Activated B cell treated with CpG ODN at 0.5 μM for 24 hours (primary cell): ENCODE measurements at regions of chr5 and their contacts with region 1.

Region 1: DNA sequence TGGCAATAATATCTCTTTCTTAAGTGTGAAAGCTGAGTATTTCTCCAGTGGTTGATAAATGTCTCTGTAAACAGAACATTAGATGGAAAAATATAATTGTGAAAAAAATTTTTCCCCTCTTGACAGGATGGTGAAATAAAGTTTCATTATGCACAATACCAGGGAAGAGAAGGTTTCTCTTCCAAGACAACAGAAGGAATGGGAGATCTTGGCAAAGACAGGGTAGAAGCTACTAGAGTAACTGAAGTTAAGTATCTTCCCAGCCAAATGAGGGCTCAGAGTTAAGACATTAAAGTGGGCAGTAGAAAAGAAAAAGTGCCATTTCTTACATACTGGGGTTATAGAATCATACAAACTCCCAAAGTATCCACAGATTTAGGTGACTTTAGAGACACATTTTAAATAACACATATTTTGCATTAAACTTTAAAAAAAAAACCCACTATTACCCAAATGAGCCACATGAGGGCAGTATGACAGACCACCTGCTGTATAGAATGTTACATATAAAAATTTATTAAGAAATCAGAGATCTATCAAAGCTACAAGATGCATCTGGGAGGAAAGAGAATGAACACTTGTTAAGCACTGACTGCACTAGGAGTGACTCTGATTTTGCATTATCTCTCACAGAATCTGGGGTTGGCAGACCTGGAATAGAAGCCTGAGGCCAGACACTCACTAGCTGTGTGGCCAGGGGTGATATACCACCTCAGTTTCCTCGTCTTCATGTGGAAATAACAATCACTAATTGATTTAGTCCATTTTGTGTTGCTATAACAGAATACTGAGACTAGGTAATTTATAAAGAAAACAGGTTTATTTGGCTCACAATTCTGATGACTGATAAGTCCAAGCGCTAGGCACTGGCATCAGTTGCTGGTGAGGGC is 98.5 kb downstream of the ARSB start:
- DNase-seq: no peak
- ATAC-seq: no peak
- H3K4me3 Mint-ChIP-seq: no peak overlapping the region
- H3K27ac Mint-ChIP-seq: peak overlapping the region; percentile 2
- H3K4me1 Mint-ChIP-seq: peaks cover 39% of the 10 kb centered on the region
- H3K27me3 Mint-ChIP-seq: no peaks in the 10 kb centered on the region
- CTCF ChIP-seq: peak; percentile 73

Region 2: DNA sequence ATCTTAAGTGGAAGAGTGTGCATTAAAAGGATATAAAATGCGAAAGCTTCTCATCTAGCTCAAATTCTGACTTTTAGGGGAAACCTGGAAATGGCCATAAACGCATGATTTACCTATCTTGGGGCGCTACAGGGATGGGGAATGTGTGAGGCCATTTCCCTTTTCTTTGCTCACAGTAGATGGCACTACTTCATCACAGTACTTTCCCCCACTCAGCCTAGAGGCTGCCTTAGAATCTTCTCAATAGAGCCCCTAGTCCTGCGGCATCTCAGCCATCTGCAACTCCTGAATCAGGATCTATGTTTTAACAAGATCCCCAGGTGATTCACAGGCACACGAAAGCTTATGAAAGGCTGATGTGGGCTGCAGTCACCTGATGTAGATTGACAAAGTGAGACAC is 348.8 kb before region 1 on chr5:
- CTCF ChIA-PET with region 1: interaction called, 3 read pairs
- POLR2A ChIA-PET with region 1: no interaction called
- intact Hi-C with region 1: loop called (anchors 1 kb)
- DNase-seq: no peak
- ATAC-seq: peak; percentile 80
- H3K4me3 Mint-ChIP-seq: no peak overlapping the region
- H3K27ac Mint-ChIP-seq: no peak overlapping the region
- H3K4me1 Mint-ChIP-seq: peaks cover 10% of the 10 kb centered on the region
- H3K27me3 Mint-ChIP-seq: no peaks in the 10 kb centered on the region
- CTCF ChIP-seq: no peak

Region 3: GRCh38 chr5:78648359-78649210 is 238.0 kb before region 1 on chr5 and contains the start of gene LHFPL2:
- CTCF ChIA-PET with region 1: interaction called, 5 read pairs
- POLR2A ChIA-PET with region 1: no interaction called
- intact Hi-C with region 1: loop called (anchors 2 kb)
- DNase-seq: peak; percentile 63
- ATAC-seq: peak; percentile 69
- H3K4me3 Mint-ChIP-seq: peak within 1 kb of the TSS; percentile 83
- H3K27ac Mint-ChIP-seq: peak within 1 kb of the TSS; percentile 73
- H3K4me1 Mint-ChIP-seq: peaks cover 25% of the 10 kb centered on the region
- H3K27me3 Mint-ChIP-seq: no peaks in the 10 kb centered on the region
- CTCF ChIP-seq: no peak
- total RNA-seq, gene LHFPL2: 11.0 and 12.0 TPM in 2 replicates

Region 4: GRCh38 chr5:78757269-78758053 is 129.1 kb before region 1 on chr5:
- CTCF ChIA-PET with region 1: interaction called, 3 read pairs
- POLR2A ChIA-PET with region 1: no interaction called
- intact Hi-C with region 1: loop called (anchors 2 kb)
- DNase-seq: no peak
- ATAC-seq: peak; percentile 38
- H3K4me3 Mint-ChIP-seq: peak overlapping the region; percentile 64
- H3K27ac Mint-ChIP-seq: peak overlapping the region; percentile 95
- H3K4me1 Mint-ChIP-seq: peaks cover 78% of the 10 kb centered on the region
- H3K27me3 Mint-ChIP-seq: no peaks in the 10 kb centered on the region
- CTCF ChIP-seq: no peak

Region 5: DNA sequence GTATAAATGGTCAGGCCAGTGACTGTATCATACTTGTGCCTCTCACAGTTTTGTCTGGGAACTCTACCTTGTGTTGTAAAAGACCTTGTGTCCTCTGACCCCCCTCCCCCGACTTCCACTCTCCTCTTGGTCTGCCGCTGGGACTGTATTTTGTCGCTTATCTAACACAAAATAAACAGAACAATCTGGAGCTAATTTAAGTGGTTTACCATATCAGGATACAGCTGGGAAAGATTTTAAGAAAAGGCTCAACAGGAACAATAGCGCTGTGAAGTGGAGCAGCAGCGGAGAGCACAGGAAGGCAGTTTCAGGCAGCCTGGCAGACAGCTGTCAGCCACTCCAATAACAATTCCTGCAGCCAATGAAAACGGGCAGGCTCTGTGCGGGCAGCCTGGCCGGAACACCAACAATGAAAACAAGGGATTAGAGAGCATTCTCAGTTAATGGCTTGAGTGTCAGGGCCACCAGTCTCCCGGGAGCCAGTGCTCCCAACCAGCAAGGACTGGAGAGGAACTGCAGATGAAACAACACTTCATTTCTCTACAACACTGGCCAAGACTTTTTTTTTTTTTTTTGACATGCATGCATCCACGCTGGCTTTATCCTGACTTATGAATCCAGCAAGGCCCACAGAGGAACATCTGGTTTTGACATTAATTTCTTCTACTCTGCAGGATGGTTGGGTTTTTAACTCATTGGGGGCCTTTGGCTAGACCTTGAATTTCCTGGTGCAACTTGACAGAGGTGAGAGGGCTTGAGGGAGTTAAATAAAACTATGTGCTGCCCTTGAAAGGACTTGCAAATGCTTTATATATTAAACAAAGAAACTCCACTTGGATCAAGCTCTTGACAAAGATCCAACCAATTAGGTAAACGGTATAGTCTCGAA is 21.8 kb after region 1 on chr5:
- CTCF ChIA-PET with region 1: interaction called, 3 read pairs
- POLR2A ChIA-PET with region 1: no interaction called
- intact Hi-C with region 1: loop called (anchors 1 kb)
- DNase-seq: no peak
- ATAC-seq: no peak
- H3K4me3 Mint-ChIP-seq: peak overlapping the region; percentile 70
- H3K27ac Mint-ChIP-seq: peak overlapping the region; percentile 59
- H3K4me1 Mint-ChIP-seq: peaks cover 67% of the 10 kb centered on the region
- H3K27me3 Mint-ChIP-seq: no peaks in the 10 kb centered on the region
- CTCF ChIP-seq: no peak

Region 6: GRCh38 chr5:79229357-79230174 is 343.0 kb after region 1 on chr5:
- CTCF ChIA-PET with region 1: no interaction called
- POLR2A ChIA-PET with region 1: no interaction called
- intact Hi-C with region 1: no loop called
- DNase-seq: no peak
- ATAC-seq: peak; percentile 57
- H3K4me3 Mint-ChIP-seq: no peak overlapping the region
- H3K27ac Mint-ChIP-seq: no peak overlapping the region
- H3K4me1 Mint-ChIP-seq: peaks cover 7% of the 10 kb centered on the region
- H3K27me3 Mint-ChIP-seq: no peaks in the 10 kb centered on the region
- CTCF ChIP-seq: no peak

Region 7: DNA sequence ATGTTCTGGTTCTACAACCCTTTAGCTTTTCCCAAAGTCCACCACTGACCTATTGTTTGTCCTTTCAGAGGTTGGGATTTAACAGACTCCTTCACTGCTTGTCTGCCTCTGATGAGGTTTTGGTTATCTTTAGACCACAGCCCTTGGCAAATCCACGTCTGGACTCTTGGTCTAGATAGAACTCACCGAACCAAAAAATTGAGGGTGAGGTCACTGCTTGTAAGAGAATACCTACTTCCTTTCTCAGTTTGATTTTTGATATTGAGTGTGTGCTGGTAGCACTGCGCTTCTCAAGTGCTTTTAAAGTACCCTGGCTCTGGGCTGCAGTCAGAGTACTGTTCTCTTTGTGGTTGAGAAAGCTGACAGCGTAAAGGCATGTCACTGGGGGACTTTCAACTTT is 411.1 kb after region 1 on chr5:
- CTCF ChIA-PET with region 1: no interaction called
- POLR2A ChIA-PET with region 1: no interaction called
- intact Hi-C with region 1: no loop called
- DNase-seq: no peak
- ATAC-seq: no peak
- H3K4me3 Mint-ChIP-seq: no peak overlapping the region
- H3K27ac Mint-ChIP-seq: no peak overlapping the region
- H3K4me1 Mint-ChIP-seq: no peaks in the 10 kb centered on the region
- H3K27me3 Mint-ChIP-seq: no peaks in the 10 kb centered on the region
- CTCF ChIP-seq: no peak